Ascending aorta (tissue), 2 donors: ENCODE measurements at regions of chr19 and their contacts with region 1.

Region 1: GRCh38 chr19:40465557-40466150 is at the start of gene BLVRB:
- DNase-seq: peak; percentile 99 to 100
- H3K4me3 ChIP-seq: peak within 1 kb of the TSS; percentile 68 to 92
- H3K27ac ChIP-seq: peak within 1 kb of the TSS; percentile 80 to 86
- H3K4me1 ChIP-seq: peaks cover 5 to 22% of the 10 kb centered on the region in 2 donors
- H3K27me3 ChIP-seq: no peaks in the 10 kb centered on the region
- CTCF ChIP-seq: no peak
- total RNA-seq, gene BLVRB: 295 TPM

Region 2: GRCh38 chr19:39833464-39834286 is 632.0 kb before region 1 on chr19 and contains the start of gene DYRK1B:
- intact Hi-C with region 1: loop called (anchors 10 kb)
- DNase-seq: peak; percentile 91 to 99
- H3K4me3 ChIP-seq: peak within 1 kb of the TSS; percentile 75 to 99
- H3K27ac ChIP-seq: peak within 1 kb of the TSS; percentile 77 to 93
- H3K4me1 ChIP-seq: peaks cover 0 to 17% of the 10 kb centered on the region in 2 donors
- H3K27me3 ChIP-seq: no peaks in the 10 kb centered on the region
- CTCF ChIP-seq: no peak
- total RNA-seq, gene DYRK1B: 34.7 TPM

Region 3: GRCh38 chr19:40370997-40371801 is 94.5 kb before region 1 on chr19:
- intact Hi-C with region 1: no loop called
- DNase-seq: no peak
- H3K4me3 ChIP-seq: no peak overlapping the region
- H3K27ac ChIP-seq: no peak overlapping the region
- H3K4me1 ChIP-seq: no peaks in the 10 kb centered on the region
- H3K27me3 ChIP-seq: no peaks in the 10 kb centered on the region
- CTCF ChIP-seq: no peak

Region 4: DNA sequence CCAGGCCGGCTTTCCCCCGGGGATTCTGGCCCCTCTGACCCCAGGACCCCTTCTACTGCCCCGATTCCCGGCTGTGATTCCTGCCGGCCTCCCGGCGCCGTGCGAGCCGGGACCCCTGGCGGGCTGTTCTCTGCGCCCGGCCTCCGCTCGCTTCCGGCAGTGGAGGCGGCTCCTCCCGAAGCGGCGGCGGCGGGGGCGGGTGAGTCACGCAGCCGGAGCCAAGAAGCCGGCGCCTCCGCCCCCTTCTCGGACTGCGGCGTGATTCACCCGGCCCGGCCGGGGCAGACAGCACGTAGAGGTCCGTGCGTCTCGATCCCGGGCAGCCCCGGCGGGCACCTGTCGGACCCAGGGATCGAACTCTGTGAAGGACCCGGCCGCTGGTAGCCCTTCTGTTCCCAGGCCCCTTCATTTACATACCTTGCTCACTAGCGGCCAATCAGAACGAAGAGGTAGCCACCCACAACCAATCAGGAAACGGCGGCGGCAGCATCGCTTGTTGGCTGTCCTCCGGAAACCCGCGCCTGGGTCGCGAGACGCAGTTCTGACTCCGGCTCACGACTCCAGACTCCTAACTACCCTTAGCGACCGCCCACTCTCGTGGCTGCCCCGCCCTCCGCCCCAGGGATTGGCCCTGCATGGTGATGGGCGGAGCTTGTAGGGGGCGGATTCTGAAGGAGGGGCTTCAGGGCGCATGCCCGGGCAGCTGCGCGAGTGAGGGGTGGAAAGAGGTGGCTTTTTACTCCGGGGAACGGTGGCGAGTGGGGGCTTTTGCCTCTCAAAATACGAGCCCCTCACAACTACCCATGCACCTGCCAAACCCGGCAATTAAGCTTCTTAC is 40.0 kb before region 1 on chr19 and contains the start of gene SERTAD1:
- intact Hi-C with region 1: loop called (anchors 1 kb)
- DNase-seq: peak; percentile 99 to 100
- H3K4me3 ChIP-seq: peak within 1 kb of the TSS; percentile 62 to 83
- H3K27ac ChIP-seq: peak within 1 kb of the TSS; percentile 98 to 99
- H3K4me1 ChIP-seq: peaks cover 14 to 30% of the 10 kb centered on the region in 2 donors
- H3K27me3 ChIP-seq: no peaks in the 10 kb centered on the region
- CTCF ChIP-seq: peak; percentile 75 to 86 (median 85)
- total RNA-seq, gene SERTAD1: 39.7 TPM

Region 5: GRCh38 chr19:40486017-40486416 is 20.4 kb after region 1 on chr19:
- intact Hi-C with region 1: no loop called
- DNase-seq: no peak
- H3K4me3 ChIP-seq: no peak overlapping the region
- H3K27ac ChIP-seq: no peak overlapping the region
- H3K4me1 ChIP-seq: no peaks in the 10 kb centered on the region
- H3K27me3 ChIP-seq: no peaks in the 10 kb centered on the region
- CTCF ChIP-seq: no peak

Region 6: DNA sequence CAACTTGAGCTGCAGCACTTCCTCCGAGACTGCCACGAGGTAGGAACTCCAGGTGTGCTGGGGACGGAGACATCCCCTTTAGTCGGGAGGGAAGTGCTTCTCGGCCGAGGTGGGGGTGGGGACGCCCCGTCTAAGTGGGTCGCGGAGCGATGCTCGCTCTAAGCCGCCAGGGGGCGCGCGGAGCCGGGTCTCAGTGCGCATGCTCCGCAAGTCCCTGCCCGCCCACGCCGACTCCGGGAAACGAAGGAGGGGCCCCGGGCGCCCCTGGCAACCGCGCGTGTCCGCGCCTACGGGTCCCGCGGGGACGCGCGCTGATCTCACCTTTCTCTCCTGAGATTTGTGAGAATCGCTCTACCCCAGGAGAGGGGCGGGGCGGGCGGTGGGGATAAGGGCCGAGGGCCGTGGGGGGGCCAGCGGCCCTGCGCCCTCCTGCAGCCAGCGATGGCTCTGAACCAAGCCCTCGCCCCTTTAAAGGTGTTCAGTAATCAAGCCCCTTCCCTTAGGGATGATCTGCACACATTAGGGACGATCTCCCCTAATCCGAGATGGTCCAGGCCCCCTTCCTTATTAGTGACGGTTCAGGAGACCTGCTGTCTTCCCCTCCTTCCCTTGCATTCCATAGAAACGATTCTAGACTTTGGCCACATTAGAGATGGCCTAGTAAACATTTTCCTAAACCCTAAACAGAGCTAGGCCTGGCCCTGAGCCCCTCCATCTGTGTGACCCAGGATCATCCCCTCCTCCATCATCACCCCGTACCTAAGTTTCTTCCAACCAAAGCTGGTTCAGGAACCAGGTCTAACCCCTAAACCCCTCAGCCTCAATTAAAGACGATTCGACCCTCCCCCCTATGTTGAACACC is 63.7 kb after region 1 on chr19:
- intact Hi-C with region 1: loop called (anchors 2 kb)
- DNase-seq: peak; percentile 61 to 91
- H3K4me3 ChIP-seq: peak overlapping the region; percentile 58 to 62
- H3K27ac ChIP-seq: no peak overlapping the region
- H3K4me1 ChIP-seq: peaks cover 2 to 5% of the 10 kb centered on the region in 2 donors
- H3K27me3 ChIP-seq: no peaks in the 10 kb centered on the region
- CTCF ChIP-seq: peak; percentile 96 to 99 (median 98)

Region 7: DNA sequence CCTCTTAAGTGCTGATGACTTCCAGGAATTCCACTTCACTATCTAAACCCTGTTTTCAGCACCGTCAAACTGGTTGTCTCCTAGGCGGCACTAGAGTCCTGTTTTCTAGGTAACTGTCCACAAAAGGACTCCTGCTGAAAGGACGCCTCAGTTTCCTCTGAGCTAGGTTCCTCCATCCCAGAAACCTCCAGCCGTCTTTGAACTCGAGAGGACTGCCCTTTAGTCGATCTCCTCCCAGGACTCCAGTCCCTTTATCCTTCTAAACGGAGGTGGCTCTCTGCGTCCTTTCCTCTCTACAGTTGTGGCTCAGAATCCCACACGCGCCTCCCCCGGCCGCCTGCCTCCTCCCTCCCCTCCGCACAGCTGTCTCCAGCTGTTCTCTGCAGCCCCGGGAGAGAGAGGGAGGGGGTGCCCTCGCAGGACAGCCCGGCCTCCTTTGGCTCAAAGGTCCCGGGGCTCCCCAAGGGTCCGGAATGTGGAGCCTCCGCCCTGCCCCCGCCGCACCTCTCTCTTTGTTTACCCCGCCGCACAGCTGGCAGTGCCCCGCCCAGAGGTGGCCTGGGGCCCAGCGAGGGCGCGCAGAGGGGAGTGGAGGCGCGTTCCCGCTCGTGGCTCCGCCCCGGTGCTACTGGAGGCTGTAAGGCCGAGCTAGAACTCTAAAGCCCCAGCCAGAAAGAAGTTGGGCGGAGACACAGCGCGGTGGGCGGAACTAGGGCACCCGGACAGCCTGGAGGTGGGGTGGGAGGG is 137.9 kb after region 1 on chr19:
- intact Hi-C with region 1: loop called (anchors 1 kb)
- DNase-seq: peak; percentile 96 to 99
- H3K4me3 ChIP-seq: peak overlapping the region; percentile 75 to 92
- H3K27ac ChIP-seq: peak overlapping the region; percentile 88 to 95
- H3K4me1 ChIP-seq: peaks cover 11 to 44% of the 10 kb centered on the region in 2 donors
- H3K27me3 ChIP-seq: no peaks in the 10 kb centered on the region
- CTCF ChIP-seq: no peak

Region 8: DNA sequence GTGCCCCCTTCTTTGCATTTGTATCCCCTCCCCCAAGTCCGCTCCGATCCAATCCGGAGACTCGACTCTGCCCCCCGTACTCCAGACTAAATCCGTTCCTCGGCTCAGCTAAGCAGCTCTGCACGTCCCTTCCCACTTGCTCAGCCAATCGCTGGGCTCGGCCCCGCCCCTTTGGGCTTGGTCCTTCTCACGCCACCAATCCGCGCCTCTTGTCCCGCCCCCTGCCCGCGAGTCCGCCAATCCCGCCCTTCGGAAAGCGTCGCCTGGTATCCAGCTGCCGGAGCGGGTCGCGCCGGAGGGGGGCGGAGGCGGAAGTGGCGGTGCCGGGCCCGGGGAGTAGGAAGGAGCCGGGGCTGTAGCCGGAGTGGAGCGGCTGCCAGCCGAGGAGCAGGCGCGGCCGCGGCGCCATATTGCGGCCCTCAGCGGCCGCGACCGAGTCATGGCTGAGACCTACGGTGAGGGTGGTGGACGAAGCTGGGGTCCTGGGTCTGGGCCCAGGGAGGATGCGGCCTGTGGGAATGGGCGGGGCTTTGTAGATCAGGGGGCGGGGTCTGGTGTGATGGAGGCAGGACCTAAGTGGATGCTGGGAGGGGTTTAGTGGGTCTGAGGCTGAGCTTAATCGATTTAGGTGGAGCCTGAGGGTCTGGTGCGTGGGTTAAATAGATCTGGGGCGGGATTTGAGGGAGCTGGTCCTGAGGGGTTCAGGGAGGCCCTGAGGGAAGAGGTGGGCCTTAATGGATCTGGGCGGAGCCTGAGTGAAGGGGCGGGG is 312.5 kb after region 1 on chr19 and contains the start of gene RAB4B:
- intact Hi-C with region 1: loop called (anchors 10 kb)
- DNase-seq: peak; percentile 99 to 100
- H3K4me3 ChIP-seq: peak within 1 kb of the TSS; percentile 81 to 91
- H3K27ac ChIP-seq: peak within 1 kb of the TSS; percentile 97 to 99
- H3K4me1 ChIP-seq: peaks cover 0 to 13% of the 10 kb centered on the region in 2 donors
- H3K27me3 ChIP-seq: no peaks in the 10 kb centered on the region
- CTCF ChIP-seq: no peak
- total RNA-seq, gene RAB4B: 56.8 TPM